MCF 10A (cell line): ENCODE measurements at regions of chr12 and their contacts with region 1.

Region 1: GRCh38 chr12:50924439-50925341 is 27.7 kb upstream of the HIGD1C start:
- DNase-seq: peak; percentile 97
- H3K4me3 Mint-ChIP-seq: peak overlapping the region; percentile 96
- H3K27ac Mint-ChIP-seq: peak overlapping the region; percentile 93
- H3K4me1 Mint-ChIP-seq: peaks cover 33% of the 10 kb centered on the region
- H3K27me3 Mint-ChIP-seq: no peaks in the 10 kb centered on the region
- CTCF ChIP-seq: no peak

Region 2: GRCh38 chr12:50776749-50777728 is 147.7 kb before region 1 on chr12:
- CTCF ChIA-PET with region 1: no interaction called
- POLR2A ChIA-PET with region 1: interaction called, 19 read pairs
- intact Hi-C with region 1: no loop called
- DNase-seq: no peak
- H3K4me3 Mint-ChIP-seq: no peak overlapping the region
- H3K27ac Mint-ChIP-seq: no peak overlapping the region
- H3K4me1 Mint-ChIP-seq: peaks cover 25% of the 10 kb centered on the region
- H3K27me3 Mint-ChIP-seq: no peaks in the 10 kb centered on the region
- CTCF ChIP-seq: no peak

Region 3: GRCh38 chr12:50825372-50825838 is 99.3 kb before region 1 on chr12:
- CTCF ChIA-PET with region 1: interaction called, 4 read pairs
- POLR2A ChIA-PET with region 1: interaction called, 53 read pairs
- intact Hi-C with region 1: no loop called
- DNase-seq: peak; percentile 73
- H3K4me3 Mint-ChIP-seq: no peak overlapping the region
- H3K27ac Mint-ChIP-seq: peak overlapping the region; percentile 11
- H3K4me1 Mint-ChIP-seq: peaks cover 18% of the 10 kb centered on the region
- H3K27me3 Mint-ChIP-seq: no peaks in the 10 kb centered on the region
- CTCF ChIP-seq: peak; percentile 25

Region 4: DNA sequence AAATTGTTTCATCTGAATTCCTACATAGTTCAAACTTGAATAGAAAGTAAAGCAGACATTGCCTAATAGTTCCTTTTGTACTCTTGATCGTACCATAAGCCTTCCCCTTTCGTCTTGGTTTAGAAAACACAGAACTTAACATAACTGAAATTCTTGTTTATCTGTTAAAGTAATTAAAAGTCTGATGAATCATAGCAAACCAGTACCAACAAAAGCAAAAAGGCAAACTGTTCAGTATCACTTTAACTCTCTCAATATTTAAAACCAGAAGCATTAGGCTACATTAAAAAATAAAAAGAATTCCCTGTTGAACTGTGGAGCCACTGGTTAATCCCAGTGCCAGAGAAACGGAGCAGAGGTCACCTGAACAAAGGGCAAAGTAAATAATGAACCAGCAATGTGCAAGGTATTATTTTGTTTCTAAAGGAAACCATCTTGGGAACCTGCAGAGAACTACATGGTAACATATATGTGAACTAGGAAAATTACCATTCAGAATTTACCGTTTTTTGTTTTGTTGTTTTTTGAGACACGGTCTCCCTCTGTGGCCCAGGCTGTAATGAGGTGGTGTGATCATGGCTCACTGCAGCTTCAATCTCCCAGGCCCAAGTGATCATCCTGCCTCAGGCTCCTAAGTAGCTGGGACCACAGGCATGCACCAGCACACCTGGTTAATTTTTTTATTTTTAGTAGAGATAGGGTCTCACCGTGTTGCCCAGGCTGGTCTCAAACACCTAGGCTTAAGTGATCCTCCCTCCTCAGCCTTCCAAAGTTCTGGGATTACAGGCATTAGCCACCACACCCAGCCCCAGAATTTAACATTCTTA is 10.5 kb after region 1 on chr12:
- CTCF ChIA-PET with region 1: no interaction called
- POLR2A ChIA-PET with region 1: interaction called, 27 read pairs
- intact Hi-C with region 1: no loop called
- DNase-seq: no peak
- H3K4me3 Mint-ChIP-seq: no peak overlapping the region
- H3K27ac Mint-ChIP-seq: peak overlapping the region; percentile 86
- H3K4me1 Mint-ChIP-seq: peaks cover 33% of the 10 kb centered on the region
- H3K27me3 Mint-ChIP-seq: no peaks in the 10 kb centered on the region
- CTCF ChIP-seq: no peak

Region 5: GRCh38 chr12:51020448-51021182 is 95.9 kb after region 1 on chr12:
- CTCF ChIA-PET with region 1: no interaction called
- POLR2A ChIA-PET with region 1: interaction called, 116 read pairs
- intact Hi-C with region 1: loop called (anchors 5 kb)
- DNase-seq: no peak
- H3K4me3 Mint-ChIP-seq: no peak overlapping the region
- H3K27ac Mint-ChIP-seq: no peak overlapping the region
- H3K4me1 Mint-ChIP-seq: peaks cover 17% of the 10 kb centered on the region
- H3K27me3 Mint-ChIP-seq: no peaks in the 10 kb centered on the region
- CTCF ChIP-seq: no peak